CD8-positive, alpha-beta memory T cell (primary cell): ENCODE measurements at regions of chr6 and their contacts with region 1.

Region 1: DNA sequence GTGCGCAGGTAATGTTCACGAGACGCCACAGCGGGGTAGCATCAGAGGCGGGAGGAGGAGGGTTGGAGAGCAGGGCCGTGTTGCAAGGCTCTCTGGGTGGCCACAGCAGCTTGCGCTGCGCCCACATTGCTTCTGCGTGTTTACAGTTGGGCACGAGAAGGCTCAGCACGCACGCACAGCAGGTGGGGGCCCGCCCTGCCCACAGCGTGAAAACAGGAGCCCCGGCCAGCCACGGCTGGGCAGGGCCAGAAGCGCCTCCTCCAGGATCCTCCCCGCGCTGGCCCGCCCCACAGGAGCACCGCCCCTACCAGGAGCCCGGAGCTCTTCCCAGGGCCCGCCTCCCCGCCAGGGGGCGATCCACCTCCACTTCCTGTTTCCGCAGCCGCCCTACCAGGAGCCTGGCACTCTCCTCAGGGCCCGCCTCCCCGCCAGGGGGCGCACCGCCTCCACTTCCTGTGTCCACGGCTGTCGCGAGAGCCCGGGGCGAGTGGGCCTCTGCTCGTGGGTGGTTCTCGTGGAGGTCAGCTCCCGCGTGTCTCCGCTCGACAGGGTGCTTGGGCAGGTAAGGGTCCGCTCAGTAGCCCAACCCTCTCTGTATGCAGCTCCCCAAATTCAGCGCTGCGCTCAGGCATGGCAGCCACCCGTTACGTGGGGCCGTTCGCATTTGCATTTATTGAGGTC is at the start of gene FAM50B:
- DNase-seq: peak; percentile 80 to 93 (median 89)
- H3K4me3 ChIP-seq: peak within 1 kb of the TSS; percentile 69
- H3K4me3 Mint-ChIP-seq: peak within 1 kb of the TSS; percentile 75 to 90 (median 83)
- H3K27ac ChIP-seq: no peak within 1 kb of the TSS
- H3K27ac Mint-ChIP-seq: peak within 1 kb of the TSS; percentile 82 to 96 (median 90)
- H3K4me1 ChIP-seq: no peaks in the 10 kb centered on the region
- H3K4me1 Mint-ChIP-seq: peaks cover 26 to 31% (median 30%) of the 10 kb centered on the region in 3 donors
- H3K27me3 ChIP-seq: no peaks in the 10 kb centered on the region
- H3K27me3 Mint-ChIP-seq: no peaks in the 10 kb centered on the region
- total RNA-seq, gene FAM50B: 7.3 to 7.5 TPM

Region 2: GRCh38 chr6:3748208-3749066 is 100.6 kb before region 1 on chr6:
- CTCF ChIA-PET with region 1: interaction called, 10 read pairs
- POLR2A ChIA-PET with region 1: no interaction called
- DNase-seq: no peak
- H3K4me3 ChIP-seq: no peak overlapping the region
- H3K4me3 Mint-ChIP-seq: peak overlapping the region in 2 of 7 donors; percentile 5 to 32
- H3K27ac ChIP-seq: no peak overlapping the region
- H3K27ac Mint-ChIP-seq: no peak overlapping the region
- H3K4me1 ChIP-seq: peaks cover 5% of the 10 kb centered on the region
- H3K4me1 Mint-ChIP-seq: peaks cover 0 to 14% (median 5%) of the 10 kb centered on the region in 3 donors
- H3K27me3 ChIP-seq: peaks cover 23% of the 10 kb centered on the region
- H3K27me3 Mint-ChIP-seq: peaks cover 20 to 39% of the 10 kb centered on the region in 2 donors

Region 3: GRCh38 chr6:3861424-3861823 is 12.4 kb after region 1 on chr6:
- CTCF ChIA-PET with region 1: interaction called, 12 read pairs
- POLR2A ChIA-PET with region 1: no interaction called
- DNase-seq: no peak
- H3K4me3 ChIP-seq: no peak overlapping the region
- H3K4me3 Mint-ChIP-seq: no peak overlapping the region
- H3K27ac ChIP-seq: no peak overlapping the region
- H3K27ac Mint-ChIP-seq: no peak overlapping the region
- H3K4me1 ChIP-seq: no peaks in the 10 kb centered on the region
- H3K4me1 Mint-ChIP-seq: no peaks in the 10 kb centered on the region
- H3K27me3 ChIP-seq: peaks cover 6% of the 10 kb centered on the region
- H3K27me3 Mint-ChIP-seq: peaks cover 8 to 31% of the 10 kb centered on the region in 2 donors

Region 4: GRCh38 chr6:3929281-3929798 is 80.3 kb after region 1 on chr6:
- CTCF ChIA-PET with region 1: interaction called, 13 read pairs
- POLR2A ChIA-PET with region 1: no interaction called
- DNase-seq: no peak
- H3K4me3 ChIP-seq: no peak overlapping the region
- H3K4me3 Mint-ChIP-seq: no peak overlapping the region
- H3K27ac ChIP-seq: no peak overlapping the region
- H3K27ac Mint-ChIP-seq: no peak overlapping the region
- H3K4me1 ChIP-seq: no peaks in the 10 kb centered on the region
- H3K4me1 Mint-ChIP-seq: no peaks in the 10 kb centered on the region
- H3K27me3 ChIP-seq: no peaks in the 10 kb centered on the region
- H3K27me3 Mint-ChIP-seq: peaks cover 0 to 4% of the 10 kb centered on the region in 2 donors

Region 5: GRCh38 chr6:3977875-3978711 is 129.0 kb after region 1 on chr6:
- CTCF ChIA-PET with region 1: interaction called, 11 read pairs
- POLR2A ChIA-PET with region 1: no interaction called
- DNase-seq: peak; percentile 1 to 63 (median 42)
- H3K4me3 ChIP-seq: no peak overlapping the region
- H3K4me3 Mint-ChIP-seq: peak overlapping the region; percentile 1 to 86 (median 59)
- H3K27ac ChIP-seq: no peak overlapping the region
- H3K27ac Mint-ChIP-seq: peak overlapping the region in 6 of 8 donors; percentile 6 to 75 (median 46)
- H3K4me1 ChIP-seq: no peaks in the 10 kb centered on the region
- H3K4me1 Mint-ChIP-seq: peaks cover 7 to 12% (median 9%) of the 10 kb centered on the region in 3 donors
- H3K27me3 ChIP-seq: no peaks in the 10 kb centered on the region
- H3K27me3 Mint-ChIP-seq: peaks cover 2 to 3% of the 10 kb centered on the region in 2 donors

Region 6: DNA sequence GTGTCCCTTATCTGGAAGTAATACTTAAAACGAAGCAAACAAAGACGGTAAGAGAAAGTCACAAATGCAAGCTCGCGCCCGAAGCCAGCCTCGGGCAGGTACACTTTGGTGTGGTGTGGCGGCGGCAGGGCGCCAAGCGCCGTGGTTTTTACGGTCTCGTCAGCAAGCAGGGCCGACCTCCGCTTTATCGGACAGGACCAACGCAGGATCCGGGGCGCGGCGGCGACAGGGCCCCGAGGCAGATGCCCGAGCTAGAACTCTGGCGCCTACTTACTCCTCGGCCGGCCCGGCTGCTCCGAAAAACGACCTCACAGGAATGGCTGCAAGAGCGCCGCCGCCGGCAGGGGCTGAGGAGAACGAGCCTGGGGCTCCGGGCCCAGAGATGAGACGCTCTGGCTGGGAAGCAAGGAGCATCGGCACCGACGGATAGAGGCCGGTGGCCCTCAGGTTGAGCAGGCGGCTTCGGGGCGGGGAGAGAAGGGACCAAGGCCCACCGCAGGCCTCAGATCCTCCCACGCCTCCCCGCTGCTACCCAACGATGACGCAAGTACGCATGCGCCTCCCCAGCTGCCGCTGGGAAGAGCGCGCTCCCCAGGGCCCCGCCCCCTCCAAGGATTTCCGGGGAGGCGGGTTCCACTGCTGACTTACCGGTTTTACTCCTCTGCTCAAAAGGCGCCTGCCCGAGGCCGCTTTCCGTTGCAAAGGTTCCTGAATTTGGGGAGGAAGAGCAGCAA is 169.3 kb after region 1 on chr6:
- CTCF ChIA-PET with region 1: interaction called, 19 read pairs
- POLR2A ChIA-PET with region 1: interaction called, 13 read pairs
- DNase-seq: peak; percentile 92 to 96 (median 95)
- H3K4me3 ChIP-seq: peak overlapping the region; percentile 74
- H3K4me3 Mint-ChIP-seq: peak overlapping the region; percentile 90 to 98 (median 96)
- H3K27ac ChIP-seq: peak overlapping the region; percentile 93
- H3K27ac Mint-ChIP-seq: peak overlapping the region; percentile 95 to 100 (median 98)
- H3K4me1 ChIP-seq: peaks cover 57% of the 10 kb centered on the region
- H3K4me1 Mint-ChIP-seq: peaks cover 63 to 87% (median 82%) of the 10 kb centered on the region in 3 donors
- H3K27me3 ChIP-seq: no peaks in the 10 kb centered on the region
- H3K27me3 Mint-ChIP-seq: no peaks in the 10 kb centered on the region

Region 7: GRCh38 chr6:4135665-4136353 is 286.7 kb after region 1 on chr6:
- CTCF ChIA-PET with region 1: interaction called, 12 read pairs
- POLR2A ChIA-PET with region 1: interaction called, 9 read pairs
- DNase-seq: peak; percentile 87 to 97 (median 93)
- H3K4me3 ChIP-seq: peak overlapping the region; percentile 71
- H3K4me3 Mint-ChIP-seq: peak overlapping the region; percentile 82 to 93 (median 87)
- H3K27ac ChIP-seq: peak overlapping the region; percentile 60
- H3K27ac Mint-ChIP-seq: peak overlapping the region; percentile 67 to 91 (median 84)
- H3K4me1 ChIP-seq: peaks cover 26% of the 10 kb centered on the region
- H3K4me1 Mint-ChIP-seq: peaks cover 43 to 69% (median 56%) of the 10 kb centered on the region in 3 donors
- H3K27me3 ChIP-seq: no peaks in the 10 kb centered on the region
- H3K27me3 Mint-ChIP-seq: no peaks in the 10 kb centered on the region